ENCODE measurements at regions of chr11 and their contacts with region 1.

Region 1: GRCh38 chr11:94673951-94674491 is 94.1 kb upstream of the AMOTL1 start:
- DNase-seq: peak; percentile 76 to 84
- ATAC-seq: peak; percentile 67 to 85
- H3K4me3 ChIP-seq: no peak overlapping the region
- H3K27ac ChIP-seq: peak overlapping the region; percentile 85 to 92 (median 86)
- H3K4me1 ChIP-seq: peaks cover 55 to 57% of the 10 kb centered on the region in 2 donors
- H3K27me3 ChIP-seq: no peaks in the 10 kb centered on the region
- CTCF ChIP-seq: no peak
- POLR2A ChIP-seq: no peak

Region 2: DNA sequence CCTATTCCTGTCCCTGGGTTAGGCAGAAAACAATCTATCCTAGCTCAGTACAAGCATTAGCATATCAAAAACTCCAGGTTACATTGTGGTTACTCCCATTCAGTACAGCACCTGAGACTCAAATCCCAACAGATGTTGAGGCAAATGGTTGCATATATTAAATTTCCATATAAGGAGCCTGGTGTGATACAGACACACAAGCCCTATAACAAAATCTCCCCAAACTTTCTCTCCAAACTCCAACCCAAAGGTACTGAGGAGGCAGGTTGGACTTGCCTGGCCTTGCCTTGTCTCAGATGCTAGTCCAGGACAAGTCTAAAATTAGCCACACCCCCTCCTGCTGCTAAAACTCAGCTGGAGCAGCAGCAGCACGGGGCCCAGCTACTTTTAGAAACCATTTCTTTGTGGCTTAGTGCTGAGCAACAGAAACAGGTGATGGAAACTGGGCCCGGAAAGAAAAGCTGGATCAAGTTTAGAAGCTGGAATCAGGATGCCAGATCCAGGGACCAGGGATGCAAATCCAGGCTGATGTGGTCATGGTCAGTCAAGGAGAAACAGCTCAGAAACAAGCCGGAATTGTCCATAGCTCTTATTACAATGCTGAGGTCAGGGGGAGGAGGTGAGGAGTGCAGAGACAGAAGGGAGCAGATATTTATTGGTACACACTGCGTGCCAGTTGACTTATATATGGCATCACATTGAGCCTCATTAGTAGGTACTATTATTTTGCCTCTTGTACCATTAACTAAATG is 20.5 kb after region 1 on chr11:
- in situ Hi-C with region 1: no loop called
- intact Hi-C with region 1: loop called (anchors 2 kb)
- DNase-seq: peak; percentile 82 to 88
- ATAC-seq: peak; percentile 98 to 100
- H3K4me3 ChIP-seq: no peak overlapping the region
- H3K27ac ChIP-seq: peak overlapping the region; percentile 81 to 86 (median 82)
- H3K4me1 ChIP-seq: peaks cover 7% of the 10 kb centered on the region in 2 donors
- H3K27me3 ChIP-seq: no peaks in the 10 kb centered on the region
- CTCF ChIP-seq: no peak
- POLR2A ChIP-seq: no peak

Region 3: GRCh38 chr11:94705896-94706615 is 32.0 kb after region 1 on chr11:
- in situ Hi-C with region 1: no loop called
- intact Hi-C with region 1: loop called (anchors 1 kb)
- DNase-seq: peak; percentile 53 to 71
- ATAC-seq: peak; percentile 87 to 92
- H3K4me3 ChIP-seq: peak overlapping the region; percentile 23 to 51 (median 48)
- H3K27ac ChIP-seq: peak overlapping the region; percentile 84 to 91 (median 88)
- H3K4me1 ChIP-seq: peaks cover 28 to 30% of the 10 kb centered on the region in 2 donors
- H3K27me3 ChIP-seq: no peaks in the 10 kb centered on the region
- CTCF ChIP-seq: no peak
- POLR2A ChIP-seq: no peak

Region 4: GRCh38 chr11:94731880-94732601 is 58.0 kb after region 1 on chr11:
- in situ Hi-C with region 1: no loop called
- intact Hi-C with region 1: no loop called
- DNase-seq: peak in 1 of 2 donors; percentile 30
- ATAC-seq: peak; percentile 65 to 79
- H3K4me3 ChIP-seq: no peak overlapping the region
- H3K27ac ChIP-seq: peak overlapping the region; percentile 41 to 79 (median 71)
- H3K4me1 ChIP-seq: peaks cover 18 to 33% of the 10 kb centered on the region in 2 donors
- H3K27me3 ChIP-seq: no peaks in the 10 kb centered on the region
- CTCF ChIP-seq: no peak
- POLR2A ChIP-seq: no peak

Region 5: DNA sequence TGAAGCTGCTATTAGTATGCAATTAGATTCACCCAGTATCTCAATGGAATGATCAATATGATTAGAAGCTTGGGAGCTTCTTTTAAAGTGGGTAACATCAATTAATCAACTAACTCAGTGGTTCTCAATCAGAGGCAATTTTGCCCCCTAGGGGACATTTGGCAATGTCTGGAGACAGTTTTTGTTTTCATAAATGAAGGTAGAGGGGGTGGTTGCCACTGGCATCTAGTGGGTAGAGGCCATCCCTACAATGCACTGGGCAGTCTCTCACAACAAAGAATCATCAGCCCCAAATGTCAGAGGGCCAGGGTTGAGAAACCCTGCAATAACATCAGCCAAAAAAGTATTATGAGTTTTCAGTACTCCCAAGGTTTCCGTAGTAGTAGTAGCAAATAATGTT is 88.2 kb after region 1 on chr11:
- in situ Hi-C with region 1: no loop called
- intact Hi-C with region 1: loop called (anchors 2 kb)
- DNase-seq: peak in 1 of 2 donors; percentile 51
- ATAC-seq: peak; percentile 45 to 74
- H3K4me3 ChIP-seq: no peak overlapping the region
- H3K27ac ChIP-seq: peak overlapping the region; percentile 85 to 98 (median 87)
- H3K4me1 ChIP-seq: peaks cover 34 to 35% of the 10 kb centered on the region in 2 donors
- H3K27me3 ChIP-seq: no peaks in the 10 kb centered on the region
- CTCF ChIP-seq: peak; percentile 34 to 53 (median 48)
- POLR2A ChIP-seq: no peak

Measured in gastrocnemius medialis (tissue), 4 donors.